SK-N-SH (cell line): ENCODE measurements at regions of chr17 and their contacts with region 1.

Region 1: GRCh38 chr17:35119368-35120165 is at the start of gene RAD51D:
- DNase-seq: peak; percentile 95
- H3K4me3 ChIP-seq: peak within 1 kb of the TSS; percentile 73 to 78
- H3K27ac ChIP-seq: peak within 1 kb of the TSS; percentile 17 to 48; a peak in 1 of 4 replicates
- H3K4me1 ChIP-seq: peaks cover 0 to 16% of the 10 kb centered on the region in 2 experiments; a peak in 1 of 4 replicates
- H3K27me3 ChIP-seq: no peaks in the 10 kb centered on the region
- CTCF ChIP-seq: peak; percentile 86
- EP300 ChIP-seq: no peak
- RAD21 ChIP-seq: peak; percentile 81
- polyA plus RNA-seq, gene RAD51D: 11.6 and 13.7 TPM in 2 replicates

Region 2: DNA sequence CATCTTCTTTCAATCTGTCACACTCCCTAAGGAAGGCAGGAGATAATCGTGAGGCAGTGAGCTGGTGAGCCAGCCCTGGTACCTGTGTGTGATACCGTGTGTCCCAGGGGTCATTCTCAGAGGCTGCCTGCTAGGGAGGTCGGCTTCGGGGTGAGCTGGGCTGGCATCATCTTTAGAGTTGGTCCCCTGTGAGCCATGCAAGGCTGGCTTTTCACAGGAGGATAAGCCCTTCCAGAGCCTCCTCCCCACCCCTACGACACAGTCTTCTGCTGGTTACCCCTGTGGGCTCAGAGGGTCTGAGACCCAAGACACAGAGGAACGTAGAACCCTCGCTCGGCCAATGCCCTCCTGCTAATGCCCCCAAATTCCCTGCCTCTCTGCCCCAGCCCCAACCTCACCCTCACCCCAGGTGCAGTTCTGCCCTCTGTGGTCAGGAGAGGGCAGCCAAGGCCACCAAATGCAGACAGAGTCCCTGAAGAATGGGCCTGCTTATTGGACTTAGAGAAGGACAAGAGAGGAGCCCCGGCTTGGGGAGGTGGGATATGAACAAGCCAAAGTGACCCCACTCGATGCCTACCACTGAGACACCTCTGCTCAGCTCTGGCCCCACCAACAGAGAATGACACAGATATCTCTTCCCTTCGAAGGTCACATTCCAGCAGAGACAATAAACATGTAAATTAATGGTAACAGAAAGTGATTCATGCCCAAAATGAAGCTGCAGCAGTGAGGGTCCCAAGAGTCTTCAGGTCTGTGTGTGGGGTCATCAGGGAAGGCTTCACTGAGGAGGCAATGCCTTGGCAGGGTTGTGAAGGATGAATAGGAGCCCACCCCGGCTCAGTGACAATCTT is 675.7 kb before region 1 on chr17:
- CTCF ChIA-PET with region 1: interaction called, 11 read pairs
- POLR2A ChIA-PET with region 1: no interaction called
- DNase-seq: peak; percentile 76
- H3K4me3 ChIP-seq: no peak overlapping the region; a peak in 1 of 4 replicates
- H3K27ac ChIP-seq: no peak overlapping the region
- H3K4me1 ChIP-seq: no peaks in the 10 kb centered on the region
- H3K27me3 ChIP-seq: no peaks in the 10 kb centered on the region
- CTCF ChIP-seq: peak; percentile 37
- EP300 ChIP-seq: no peak
- RAD21 ChIP-seq: peak; percentile 83

Region 3: GRCh38 chr17:34961093-34961911 is 158.3 kb before region 1 on chr17 and contains the starts of genes CCT6B and ZNF830:
- CTCF ChIA-PET with region 1: no interaction called
- POLR2A ChIA-PET with region 1: no interaction called
- DNase-seq: peak; percentile 87
- H3K4me3 ChIP-seq: peak within 1 kb of the TSS; percentile 97 to 99
- H3K27ac ChIP-seq: peak within 1 kb of the TSS; percentile 87 to 96
- H3K4me1 ChIP-seq: peaks cover 4 to 10% of the 10 kb centered on the region in 2 experiments; a peak in 3 of 4 replicates
- H3K27me3 ChIP-seq: no peaks in the 10 kb centered on the region
- CTCF ChIP-seq: no peak
- EP300 ChIP-seq: peak in 1 of 2 experiments; percentile 35; a peak in 1 of 4 replicates
- RAD21 ChIP-seq: no peak
- polyA plus RNA-seq, gene CCT6B: 0.48 and 0.57 TPM in 2 replicates
- polyA plus RNA-seq, gene ZNF830: 7.8 and 8.8 TPM in 2 replicates

Region 4: DNA sequence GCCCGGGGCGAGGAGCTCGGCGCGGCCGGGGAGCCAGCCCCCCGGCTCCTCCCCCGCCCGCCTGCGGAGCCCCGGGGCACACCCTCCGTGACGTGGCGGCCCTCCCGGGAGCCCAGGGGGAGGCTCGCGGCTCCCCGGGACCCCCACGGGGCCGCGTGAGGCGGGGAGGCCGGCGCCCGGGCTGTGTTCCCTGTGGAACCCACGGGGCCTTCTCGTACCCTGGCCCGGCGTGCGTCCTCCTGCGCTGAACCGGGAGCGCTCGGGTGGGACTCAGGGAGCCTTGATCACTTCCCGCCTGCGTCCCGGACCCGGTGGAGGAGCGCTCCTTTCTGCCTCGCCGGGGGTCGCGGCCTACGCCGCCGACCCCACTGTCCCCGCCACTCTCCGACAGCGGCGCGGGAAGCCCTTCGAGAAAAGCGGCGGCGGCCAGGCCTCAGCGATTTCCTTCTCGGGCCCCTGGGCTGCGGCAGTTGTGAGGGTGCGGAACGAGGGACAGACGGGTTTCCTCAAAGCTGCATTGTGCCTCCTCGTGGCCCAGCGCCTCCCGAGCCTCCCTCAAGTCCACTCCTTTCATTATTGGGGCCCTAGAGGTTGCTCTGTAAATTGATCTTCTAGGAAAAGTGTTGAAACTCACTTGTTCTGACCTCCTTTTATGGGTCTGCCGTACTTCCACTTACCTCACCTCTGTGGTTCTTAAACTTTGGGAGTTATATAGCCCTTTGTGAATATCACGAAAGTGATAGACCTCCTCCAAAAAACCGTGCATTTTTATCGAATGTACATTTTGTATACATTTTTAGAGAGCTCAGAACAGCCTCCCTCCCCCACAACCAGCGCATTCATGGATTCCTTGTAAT is 138.7 kb before region 1 on chr17:
- CTCF ChIA-PET with region 1: interaction called, 25 read pairs
- POLR2A ChIA-PET with region 1: no interaction called
- DNase-seq: peak; percentile 95
- H3K4me3 ChIP-seq: peak overlapping the region; percentile 71 to 80
- H3K27ac ChIP-seq: peak overlapping the region; percentile 91 to 94
- H3K4me1 ChIP-seq: peaks cover 0 to 15% of the 10 kb centered on the region in 2 experiments; a peak in 2 of 4 replicates
- H3K27me3 ChIP-seq: no peaks in the 10 kb centered on the region
- CTCF ChIP-seq: peak; percentile 55
- EP300 ChIP-seq: no peak; a peak in 1 of 4 replicates
- RAD21 ChIP-seq: peak; percentile 50

Region 5: DNA sequence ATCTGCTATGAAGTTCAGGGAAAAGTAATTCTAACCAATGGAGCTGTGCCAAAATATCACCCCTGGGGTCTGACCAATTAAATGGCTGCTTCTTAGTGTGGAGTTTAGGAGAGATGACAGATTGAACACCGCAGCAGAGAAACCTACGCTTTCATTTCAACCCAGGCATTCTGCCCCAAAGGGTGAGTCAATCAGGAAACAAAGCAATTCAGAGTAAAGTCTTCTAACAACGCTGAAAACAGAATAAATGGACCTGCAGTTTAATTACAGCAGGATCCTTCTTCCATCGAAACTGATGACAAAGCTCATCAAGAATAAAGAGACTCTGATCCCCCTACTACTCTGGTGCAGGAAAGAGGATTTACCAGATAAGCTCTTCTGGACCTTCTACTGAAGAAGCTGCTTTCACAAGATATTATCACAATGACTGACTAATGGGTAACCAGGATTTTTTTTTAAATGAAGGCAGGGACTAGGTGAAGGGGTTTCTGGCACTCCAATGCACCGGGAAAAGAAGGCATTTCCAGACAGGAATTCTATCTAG is 72.8 kb before region 1 on chr17:
- CTCF ChIA-PET with region 1: no interaction called
- POLR2A ChIA-PET with region 1: no interaction called
- DNase-seq: peak; percentile 54
- H3K4me3 ChIP-seq: peak overlapping the region; percentile 9 to 40; a peak in 2 of 4 replicates
- H3K27ac ChIP-seq: peak overlapping the region in 1 of 2 experiments; percentile 54; a peak in 2 of 4 replicates
- H3K4me1 ChIP-seq: peaks cover 3 to 16% of the 10 kb centered on the region in 2 experiments; a peak in 2 of 4 replicates
- H3K27me3 ChIP-seq: no peaks in the 10 kb centered on the region
- CTCF ChIP-seq: no peak
- EP300 ChIP-seq: no peak
- RAD21 ChIP-seq: no peak

Region 6: DNA sequence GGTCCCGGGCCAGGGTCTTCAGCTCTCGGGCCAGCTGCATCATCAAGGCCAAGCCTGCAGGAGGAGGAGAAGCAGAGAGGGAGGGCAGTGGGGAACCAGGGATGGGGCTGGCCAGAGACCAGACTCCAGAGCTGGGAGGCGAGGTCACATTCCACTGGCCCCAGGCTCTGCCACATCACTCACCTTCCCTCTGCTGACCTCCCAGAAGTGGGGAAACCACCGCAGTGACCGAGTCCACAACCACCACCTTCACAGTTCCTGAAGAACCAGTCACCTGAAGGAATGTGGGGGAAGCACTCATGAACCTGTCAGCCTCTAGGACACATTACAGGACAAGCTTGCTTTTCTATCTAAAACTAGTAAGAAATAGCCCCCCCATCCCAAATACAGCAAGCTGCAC is 16.3 kb before region 1 on chr17:
- CTCF ChIA-PET with region 1: interaction called, 12 read pairs
- POLR2A ChIA-PET with region 1: no interaction called
- DNase-seq: no peak
- H3K4me3 ChIP-seq: no peak overlapping the region
- H3K27ac ChIP-seq: no peak overlapping the region
- H3K4me1 ChIP-seq: no peaks in the 10 kb centered on the region
- H3K27me3 ChIP-seq: no peaks in the 10 kb centered on the region
- CTCF ChIP-seq: no peak
- EP300 ChIP-seq: no peak
- RAD21 ChIP-seq: no peak